Caco-2 (cell line): ENCODE measurements at regions of chr1 and their contacts with region 1.

Region 1: GRCh38 chr1:174103766-174104165 is 55.6 kb upstream of the RABGAP1L start:
- DNase-seq: no peak
- H3K4me3 ChIP-seq: no peak overlapping the region
- H3K4me3 Mint-ChIP-seq: no peak overlapping the region
- H3K27ac Mint-ChIP-seq: no peak overlapping the region
- H3K4me1 ChIP-seq: no peaks in the 10 kb centered on the region
- H3K4me1 Mint-ChIP-seq: no peaks in the 10 kb centered on the region
- H3K27me3 ChIP-seq: no peaks in the 10 kb centered on the region
- H3K27me3 Mint-ChIP-seq: no peaks in the 10 kb centered on the region
- CTCF ChIP-seq: no peak

Region 2: GRCh38 chr1:174060090-174060489 is 43.7 kb before region 1 on chr1:
- CTCF ChIA-PET with region 1: no interaction called
- POLR2A ChIA-PET with region 1: no interaction called
- intact Hi-C with region 1: loop called (anchors 1 kb)
- DNase-seq: no peak
- H3K4me3 ChIP-seq: no peak overlapping the region
- H3K4me3 Mint-ChIP-seq: no peak overlapping the region
- H3K27ac Mint-ChIP-seq: no peak overlapping the region
- H3K4me1 ChIP-seq: no peaks in the 10 kb centered on the region; the same call in 1 of the 2 replicates
- H3K4me1 Mint-ChIP-seq: no peaks in the 10 kb centered on the region
- H3K27me3 ChIP-seq: no peaks in the 10 kb centered on the region
- H3K27me3 Mint-ChIP-seq: peaks cover under 1% of the 10 kb centered on the region
- CTCF ChIP-seq: no peak

Region 3: DNA sequence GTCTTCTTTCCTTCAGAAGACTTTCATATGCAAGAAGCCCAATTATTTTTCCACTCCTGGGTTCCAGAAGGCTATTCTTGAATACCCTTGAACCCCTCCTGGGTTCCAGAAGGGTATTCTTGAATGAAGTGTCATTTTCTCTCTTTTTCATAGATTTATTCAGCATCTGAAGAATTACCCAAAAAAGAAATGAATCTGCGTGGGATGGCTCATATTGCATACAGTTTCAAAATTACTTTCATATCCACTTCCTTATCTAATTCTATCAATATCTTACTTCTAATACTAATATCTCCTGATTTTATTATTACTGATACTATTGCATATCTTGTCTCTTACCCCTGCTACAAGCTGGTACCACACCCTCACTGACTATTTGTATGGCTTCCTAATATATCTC is 32.9 kb after region 1 on chr1:
- CTCF ChIA-PET with region 1: no interaction called
- POLR2A ChIA-PET with region 1: no interaction called
- intact Hi-C with region 1: no loop called
- DNase-seq: no peak
- H3K4me3 ChIP-seq: no peak overlapping the region
- H3K4me3 Mint-ChIP-seq: no peak overlapping the region
- H3K27ac Mint-ChIP-seq: no peak overlapping the region
- H3K4me1 ChIP-seq: no peaks in the 10 kb centered on the region
- H3K4me1 Mint-ChIP-seq: no peaks in the 10 kb centered on the region
- H3K27me3 ChIP-seq: no peaks in the 10 kb centered on the region
- H3K27me3 Mint-ChIP-seq: no peaks in the 10 kb centered on the region
- CTCF ChIP-seq: no peak

Region 4: DNA sequence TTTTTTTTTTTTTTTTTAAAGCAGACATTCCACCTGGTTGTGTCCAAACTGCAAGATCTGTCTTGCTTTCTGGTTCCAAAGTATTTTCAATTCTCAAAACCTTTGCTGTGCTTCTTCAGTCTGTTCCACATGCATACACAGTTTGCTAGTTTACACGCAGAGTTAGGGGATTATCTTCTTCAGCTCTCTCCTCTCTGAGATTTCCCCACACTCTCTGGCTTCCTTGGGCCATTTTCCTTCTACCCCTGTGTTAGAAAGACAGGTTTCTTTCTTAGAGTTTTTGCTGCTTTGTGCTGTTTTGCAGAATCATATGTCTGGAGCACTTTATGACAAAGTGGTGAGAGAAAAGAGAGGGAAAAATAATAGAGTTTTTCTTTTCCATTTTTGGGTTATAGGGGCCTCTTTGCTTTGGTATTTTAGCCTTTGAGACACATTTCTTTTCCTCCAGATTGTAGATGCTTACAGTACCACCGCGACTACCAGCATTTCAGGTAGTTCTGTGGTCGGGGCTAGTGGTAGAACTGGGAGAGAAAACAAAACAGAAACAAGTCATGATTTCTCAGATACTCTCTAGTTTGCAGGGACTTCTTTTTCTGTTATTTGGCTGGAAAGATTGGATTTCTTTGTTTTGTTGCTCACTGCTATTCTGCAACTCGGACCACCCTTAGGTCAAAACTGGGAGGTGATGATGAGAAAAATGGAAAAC is 121.9 kb after region 1 on chr1:
- CTCF ChIA-PET with region 1: no interaction called
- POLR2A ChIA-PET with region 1: no interaction called
- intact Hi-C with region 1: no loop called
- DNase-seq: no peak
- H3K4me3 ChIP-seq: no peak overlapping the region
- H3K4me3 Mint-ChIP-seq: no peak overlapping the region
- H3K27ac Mint-ChIP-seq: no peak overlapping the region
- H3K4me1 ChIP-seq: no peaks in the 10 kb centered on the region
- H3K4me1 Mint-ChIP-seq: no peaks in the 10 kb centered on the region
- H3K27me3 ChIP-seq: no peaks in the 10 kb centered on the region
- H3K27me3 Mint-ChIP-seq: no peaks in the 10 kb centered on the region
- CTCF ChIP-seq: no peak